ENCODE measurements at regions of chr14 and their contacts with region 1.

Region 1: GRCh38 chr14:21510735-21511657 is at the start of gene METTL3:
- DNase-seq: peak; percentile 96
- H3K4me3 ChIP-seq: peak within 1 kb of the TSS; percentile 98
- CTCF ChIP-seq: no peak

Region 2: GRCh38 chr14:21476925-21477681 is 33.9 kb before region 1 on chr14 and contains the starts of genes RAB2B and TOX4:
- CTCF ChIA-PET with region 1: interaction called, 19 read pairs
- POLR2A ChIA-PET with region 1: interaction called, 8 read pairs
- DNase-seq: peak; percentile 94
- H3K4me3 ChIP-seq: peak within 1 kb of the TSS; percentile 94
- CTCF ChIP-seq: peak; percentile 97

Region 3: DNA sequence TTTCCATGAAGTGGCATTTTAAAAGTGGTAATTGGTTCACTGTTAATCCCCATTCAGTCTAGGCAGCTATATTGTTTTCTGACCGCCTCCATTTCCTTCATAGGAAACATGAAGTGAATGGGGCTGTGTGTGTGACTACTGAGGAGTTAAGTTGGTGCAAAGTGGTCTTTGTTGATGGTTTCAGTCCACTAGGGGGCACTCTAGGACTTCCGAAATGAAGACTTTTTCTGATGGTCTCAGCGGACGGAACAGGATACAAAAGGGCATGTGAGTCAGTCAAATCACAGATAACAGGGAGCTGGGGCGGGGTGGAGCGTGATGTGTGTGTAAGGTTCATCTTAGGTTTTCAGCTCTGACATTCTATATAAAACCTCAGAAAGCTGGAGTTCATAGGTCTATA is 402.8 kb after region 1 on chr14:
- CTCF ChIA-PET with region 1: no interaction called
- POLR2A ChIA-PET with region 1: no interaction called
- DNase-seq: no peak
- H3K4me3 ChIP-seq: no peak overlapping the region
- CTCF ChIP-seq: peak; percentile 25

Measured in AG04449 (cell line).